ENCODE measurements at regions of chr1 and their contacts with region 1.

Region 1: GRCh38 chr1:2137257-2138121 is 57.1 kb downstream of the FAAP20 start:
- DNase-seq: no peak
- H3K4me3 ChIP-seq: no peak overlapping the region
- H3K27ac ChIP-seq: no peak overlapping the region
- H3K4me1 ChIP-seq: peaks cover 0 to 28% of the 10 kb centered on the region in 2 experiments; a peak in 2 of 4 replicates
- H3K27me3 ChIP-seq: no peaks in the 10 kb centered on the region
- CTCF ChIP-seq: no peak
- EP300 ChIP-seq: no peak
- RAD21 ChIP-seq: no peak

Region 2: DNA sequence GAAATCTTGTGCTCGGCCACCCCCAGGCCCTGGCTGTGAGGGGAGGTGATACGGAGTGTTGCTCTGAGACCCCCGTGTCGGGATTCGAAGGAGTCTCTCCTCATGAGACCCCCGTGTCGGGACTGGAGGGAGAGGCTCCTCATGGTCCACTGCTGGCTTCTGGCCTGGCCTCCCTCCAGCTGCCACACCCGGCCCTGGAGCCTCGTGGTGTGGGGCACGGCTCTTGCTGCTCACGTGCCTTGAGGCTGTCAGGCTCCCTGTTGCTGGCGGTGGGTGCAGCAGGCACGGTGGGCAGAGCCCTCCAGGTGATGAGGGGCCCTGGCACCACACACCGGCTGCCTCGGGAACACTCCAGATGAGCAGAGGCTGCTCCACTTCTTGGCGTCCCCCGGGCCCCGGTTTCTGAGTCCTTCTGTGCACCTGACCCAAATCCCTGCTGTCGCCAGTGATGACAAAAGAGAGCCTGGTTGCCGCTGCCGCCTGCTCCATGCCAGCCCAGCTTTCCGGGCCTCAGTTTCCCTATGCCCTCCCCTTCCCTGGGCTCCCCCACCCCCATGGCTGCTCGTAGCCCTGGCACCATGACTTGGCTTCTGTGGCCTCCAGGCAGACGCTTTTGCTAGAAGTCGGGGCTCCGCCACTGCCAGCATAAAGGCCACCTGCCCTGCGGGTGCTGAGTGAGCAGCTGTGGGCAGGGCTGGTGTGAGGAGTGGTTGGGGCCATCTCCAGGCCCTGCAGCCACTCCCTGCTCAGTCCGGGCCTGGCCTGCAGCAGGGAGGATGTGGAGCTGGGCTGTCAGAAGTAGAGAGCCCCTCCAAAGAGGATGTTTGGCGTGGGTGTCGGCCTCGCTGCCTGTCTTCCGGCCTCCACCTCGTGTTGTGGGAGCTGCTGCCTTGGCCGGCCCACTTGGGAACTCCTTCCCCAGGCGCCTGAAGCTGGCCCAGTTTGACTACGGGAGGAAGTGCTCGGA is 608.9 kb before region 1 on chr1:
- CTCF ChIA-PET with region 1: no interaction called
- POLR2A ChIA-PET with region 1: no interaction called
- DNase-seq: peak; percentile 19
- H3K4me3 ChIP-seq: no peak overlapping the region
- H3K27ac ChIP-seq: no peak overlapping the region
- H3K4me1 ChIP-seq: no peaks in the 10 kb centered on the region
- H3K27me3 ChIP-seq: no peaks in the 10 kb centered on the region
- CTCF ChIP-seq: no peak
- EP300 ChIP-seq: no peak
- RAD21 ChIP-seq: no peak

Region 3: GRCh38 chr1:2127187-2128145 is 10.0 kb before region 1 on chr1:
- CTCF ChIA-PET with region 1: interaction called, 14 read pairs
- POLR2A ChIA-PET with region 1: no interaction called
- DNase-seq: no peak
- H3K4me3 ChIP-seq: no peak overlapping the region
- H3K27ac ChIP-seq: no peak overlapping the region
- H3K4me1 ChIP-seq: peaks cover 0 to 5% of the 10 kb centered on the region in 2 experiments; a peak in 2 of 4 replicates
- H3K27me3 ChIP-seq: no peaks in the 10 kb centered on the region
- CTCF ChIP-seq: no peak
- EP300 ChIP-seq: no peak
- RAD21 ChIP-seq: no peak

Region 4: GRCh38 chr1:2148691-2149090 is 11.2 kb after region 1 on chr1:
- CTCF ChIA-PET with region 1: interaction called, 28 read pairs
- POLR2A ChIA-PET with region 1: no interaction called
- DNase-seq: no peak
- H3K4me3 ChIP-seq: no peak overlapping the region
- H3K27ac ChIP-seq: no peak overlapping the region
- H3K4me1 ChIP-seq: no peaks in the 10 kb centered on the region
- H3K27me3 ChIP-seq: no peaks in the 10 kb centered on the region
- CTCF ChIP-seq: no peak
- EP300 ChIP-seq: no peak
- RAD21 ChIP-seq: no peak

Region 5: DNA sequence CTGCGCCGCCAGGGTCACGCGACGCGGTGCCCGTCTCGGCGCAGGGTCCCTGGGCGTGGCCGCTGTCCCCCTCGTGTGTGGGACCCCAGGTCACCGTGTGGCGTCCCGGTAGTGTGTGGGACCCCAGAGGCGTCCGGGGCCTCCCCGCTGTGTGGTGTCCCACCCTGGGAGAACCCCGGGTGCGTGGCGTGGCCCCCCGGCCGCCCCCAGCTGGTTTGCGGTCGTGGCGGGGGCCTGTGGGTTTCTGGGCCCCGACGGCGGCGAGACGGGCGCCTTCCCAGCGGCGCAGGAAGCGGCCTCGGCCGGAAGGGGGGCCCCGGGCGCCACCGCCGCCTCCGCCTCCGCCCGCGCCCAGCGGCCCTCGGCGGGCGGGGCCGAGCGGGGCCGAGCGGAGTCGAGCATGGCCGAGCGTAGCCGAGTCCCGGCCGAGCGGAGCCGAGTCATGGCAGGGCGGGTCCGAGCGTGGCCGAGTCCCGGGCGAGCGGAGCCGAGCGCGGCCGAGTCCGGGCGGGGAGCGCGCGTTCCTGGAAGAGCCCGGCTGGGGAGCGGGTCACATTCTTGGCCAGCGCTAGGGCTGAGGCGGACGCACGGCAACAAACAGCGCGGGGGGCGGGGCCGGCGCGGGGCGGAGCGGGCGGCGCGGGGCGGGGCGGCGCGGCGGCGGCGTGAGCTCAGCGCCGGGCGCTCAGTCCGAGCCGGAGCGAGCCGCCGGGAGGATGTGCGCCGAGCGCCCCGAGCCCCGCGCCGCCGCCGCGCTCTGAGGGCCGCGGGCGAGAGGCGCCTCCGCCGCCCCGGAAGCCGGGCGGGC is 90.1 kb after region 1 on chr1:
- CTCF ChIA-PET with region 1: no interaction called
- POLR2A ChIA-PET with region 1: no interaction called
- DNase-seq: peak; percentile 100
- H3K4me3 ChIP-seq: peak overlapping the region; percentile 68 to 80
- H3K27ac ChIP-seq: peak overlapping the region; percentile 80 to 94
- H3K4me1 ChIP-seq: peaks cover 0 to 37% of the 10 kb centered on the region in 2 experiments; a peak in 2 of 4 replicates
- H3K27me3 ChIP-seq: no peaks in the 10 kb centered on the region
- CTCF ChIP-seq: no peak
- EP300 ChIP-seq: no peak
- RAD21 ChIP-seq: no peak